HEK293 (cell line): ENCODE measurements at regions of chr9 and their contacts with region 1.

Region 1: DNA sequence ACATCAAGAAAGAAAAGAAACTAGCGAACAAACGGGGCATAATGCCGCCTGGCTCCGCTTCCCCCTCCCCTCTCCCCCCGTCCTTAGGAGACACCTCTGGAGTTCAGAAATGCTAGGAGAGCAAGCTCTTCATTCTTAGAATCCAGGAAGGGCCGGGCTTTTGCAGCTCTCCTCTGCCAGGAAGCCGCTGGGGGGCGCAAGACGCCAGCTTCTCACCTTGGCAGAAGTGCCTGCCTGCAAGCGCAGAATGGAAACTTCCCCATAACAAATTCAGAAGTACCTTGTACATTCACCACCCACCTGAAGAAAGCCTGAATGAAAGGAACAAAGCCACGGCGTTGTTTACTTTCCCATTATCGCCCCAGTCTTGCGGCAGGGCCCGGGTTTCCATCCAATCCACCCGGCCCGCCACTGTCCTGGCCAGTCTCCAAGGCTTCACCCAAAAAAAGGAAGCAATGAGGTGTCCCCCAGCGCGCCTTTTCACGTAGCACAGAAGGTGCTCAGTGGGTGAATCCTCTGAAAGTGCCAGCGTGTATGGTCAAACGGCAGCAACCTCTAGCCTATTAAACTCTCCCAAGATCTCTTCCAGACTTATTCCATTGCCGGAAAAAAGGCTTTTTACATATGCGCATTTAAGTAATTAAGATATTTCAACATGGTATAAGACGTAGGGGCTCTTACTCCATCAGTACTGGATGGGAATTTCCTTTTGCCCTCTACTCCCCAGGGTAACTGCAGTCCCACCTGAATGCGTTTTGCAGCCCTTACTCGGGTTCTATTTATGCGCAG is 1.6 kb upstream of the GADD45G start:
- H3K4me3 ChIP-seq: peak overlapping the region; percentile 41
- H3K27ac ChIP-seq: peak overlapping the region; percentile 74; the same call in 1 of the 2 replicates
- H3K4me1 ChIP-seq: peaks cover 4% of the 10 kb centered on the region; the same call in 1 of the 2 replicates
- CTCF ChIP-seq: peak; percentile 53

Region 2: GRCh38 chr9:89738137-89738932 is 135.2 kb after region 1 on chr9:
- CTCF ChIA-PET with region 1: interaction called, 19 read pairs
- POLR2A ChIA-PET with region 1: interaction called, 4 read pairs
- H3K4me3 ChIP-seq: no peak overlapping the region
- H3K27ac ChIP-seq: no peak overlapping the region
- H3K4me1 ChIP-seq: no peaks in the 10 kb centered on the region
- CTCF ChIP-seq: no peak

Region 3: GRCh38 chr9:89911721-89912604 is 308.8 kb after region 1 on chr9:
- CTCF ChIA-PET with region 1: interaction called, 13 read pairs
- POLR2A ChIA-PET with region 1: interaction called, 8 read pairs
- H3K4me3 ChIP-seq: no peak overlapping the region
- H3K27ac ChIP-seq: no peak overlapping the region
- H3K4me1 ChIP-seq: no peaks in the 10 kb centered on the region
- CTCF ChIP-seq: no peak

Region 4: GRCh38 chr9:89961616-89962341 is 358.6 kb after region 1 on chr9:
- CTCF ChIA-PET with region 1: interaction called, 10 read pairs
- POLR2A ChIA-PET with region 1: no interaction called
- H3K4me3 ChIP-seq: no peak overlapping the region
- H3K27ac ChIP-seq: no peak overlapping the region
- H3K4me1 ChIP-seq: no peaks in the 10 kb centered on the region
- CTCF ChIP-seq: no peak

Region 5: DNA sequence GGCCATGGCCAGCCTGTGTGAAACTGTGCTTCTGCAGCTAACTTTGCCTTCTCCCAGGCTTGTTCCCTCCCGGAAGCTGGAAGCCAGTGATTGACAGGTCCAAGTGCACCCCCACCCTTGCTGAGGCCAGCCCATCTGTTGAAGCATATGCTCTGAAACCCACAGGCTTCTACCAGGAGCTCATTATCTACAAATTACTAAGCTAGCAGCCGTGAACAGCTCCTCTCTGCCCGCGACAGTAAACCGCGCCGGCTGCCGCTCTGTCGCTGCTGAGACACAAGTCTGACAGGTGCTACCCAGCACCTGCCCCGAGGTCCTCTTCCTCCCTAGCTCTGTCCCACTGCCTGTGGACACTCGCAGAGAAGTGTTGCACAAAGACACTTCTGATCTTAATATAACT is 492.5 kb after region 1 on chr9:
- CTCF ChIA-PET with region 1: interaction called, 234 read pairs
- POLR2A ChIA-PET with region 1: interaction called, 45 read pairs
- H3K4me3 ChIP-seq: no peak overlapping the region
- H3K27ac ChIP-seq: no peak overlapping the region
- H3K4me1 ChIP-seq: no peaks in the 10 kb centered on the region
- CTCF ChIP-seq: no peak